ENCODE measurements at regions of chr15 and their contacts with region 1.

Region 1: GRCh38 chr15:82159922-82160321 is 102.6 kb downstream of the EFL1 start:
- DNase-seq: no peak
- CTCF ChIP-seq: no peak

Region 2: GRCh38 chr15:82139823-82140268 is 20.1 kb before region 1 on chr15:
- CTCF ChIA-PET with region 1: interaction called, 10 read pairs
- POLR2A ChIA-PET with region 1: no interaction called
- DNase-seq: no peak
- CTCF ChIP-seq: peak; percentile 42

Measured in GM10248 (cell line).